Caco-2 (cell line): ENCODE measurements at regions of chr15 and their contacts with region 1.

Region 1: DNA sequence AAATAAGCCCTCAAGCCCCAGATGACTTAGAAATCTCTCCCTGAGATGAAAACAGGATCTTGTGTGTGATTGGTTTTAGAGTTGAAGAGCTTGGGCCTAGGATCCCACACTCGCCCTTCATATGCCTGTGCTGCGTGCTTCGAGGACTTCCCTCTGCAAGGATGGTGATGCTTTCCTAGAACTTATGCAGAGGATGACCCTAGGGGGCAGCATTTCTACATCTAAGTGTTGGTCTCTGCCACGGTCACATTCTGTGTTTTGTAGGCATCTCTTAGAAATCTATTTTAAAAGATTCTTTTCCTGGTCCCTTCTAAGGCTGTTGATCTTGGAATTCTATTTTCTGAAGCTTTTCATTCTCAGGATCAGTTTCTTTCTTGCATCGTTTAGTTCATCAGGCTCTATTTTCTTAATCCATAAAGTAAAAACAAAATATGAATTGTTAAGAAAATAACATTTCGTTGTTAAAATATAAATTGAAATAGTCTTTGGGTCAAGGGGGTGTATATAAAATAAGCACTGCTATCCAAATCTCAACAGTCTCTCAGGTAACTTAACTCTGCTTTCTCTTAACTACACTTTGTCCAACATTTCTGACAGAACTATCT is 45.7 kb downstream of the WDR76 start:
- DNase-seq: peak; percentile 56 to 72
- H3K4me3 ChIP-seq: no peak overlapping the region
- H3K4me3 Mint-ChIP-seq: no peak overlapping the region
- H3K27ac Mint-ChIP-seq: no peak overlapping the region
- H3K4me1 ChIP-seq: peaks cover 11% of the 10 kb centered on the region
- H3K4me1 Mint-ChIP-seq: peaks cover 10% of the 10 kb centered on the region
- H3K27me3 ChIP-seq: no peaks in the 10 kb centered on the region
- H3K27me3 Mint-ChIP-seq: no peaks in the 10 kb centered on the region
- CTCF ChIP-seq: peak; percentile 67 to 68

Region 2: GRCh38 chr15:43889042-43889441 is 16.5 kb after region 1 on chr15:
- CTCF ChIA-PET with region 1: interaction called, 5 read pairs
- POLR2A ChIA-PET with region 1: no interaction called
- intact Hi-C with region 1: loop called (anchors 1 kb)
- DNase-seq: peak; percentile 59
- H3K4me3 ChIP-seq: no peak overlapping the region
- H3K4me3 Mint-ChIP-seq: peak overlapping the region; percentile 33
- H3K27ac Mint-ChIP-seq: peak overlapping the region; percentile 48
- H3K4me1 ChIP-seq: peaks cover 32% of the 10 kb centered on the region
- H3K4me1 Mint-ChIP-seq: peaks cover 31% of the 10 kb centered on the region
- H3K27me3 ChIP-seq: no peaks in the 10 kb centered on the region
- H3K27me3 Mint-ChIP-seq: no peaks in the 10 kb centered on the region
- CTCF ChIP-seq: no peak

Region 3: DNA sequence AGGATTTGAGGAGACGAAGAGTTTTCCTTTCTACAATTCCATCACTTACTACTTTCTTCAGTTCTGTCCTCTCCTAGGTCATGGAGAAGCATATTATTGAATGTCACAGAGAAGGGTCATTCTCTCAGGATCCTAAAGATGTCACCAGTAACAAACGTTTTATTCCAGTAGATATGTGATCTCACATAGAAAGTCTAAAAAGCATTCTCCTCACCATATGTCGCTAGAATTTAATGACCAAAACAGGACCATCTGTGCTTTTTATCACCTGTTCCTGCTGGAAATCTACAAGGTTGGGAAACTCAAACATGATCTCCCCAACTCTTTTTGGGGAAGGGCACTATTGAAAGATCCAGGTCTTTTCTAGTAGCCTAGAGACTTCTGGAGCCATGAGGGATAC is 346.6 kb after region 1 on chr15:
- CTCF ChIA-PET with region 1: no interaction called
- POLR2A ChIA-PET with region 1: no interaction called
- intact Hi-C with region 1: loop called (anchors 1 kb)
- DNase-seq: no peak
- H3K4me3 ChIP-seq: no peak overlapping the region
- H3K4me3 Mint-ChIP-seq: no peak overlapping the region
- H3K27ac Mint-ChIP-seq: no peak overlapping the region
- H3K4me1 ChIP-seq: peaks cover 19% of the 10 kb centered on the region
- H3K4me1 Mint-ChIP-seq: peaks cover 6% of the 10 kb centered on the region
- H3K27me3 ChIP-seq: no peaks in the 10 kb centered on the region
- H3K27me3 Mint-ChIP-seq: no peaks in the 10 kb centered on the region
- CTCF ChIP-seq: no peak

Region 4: DNA sequence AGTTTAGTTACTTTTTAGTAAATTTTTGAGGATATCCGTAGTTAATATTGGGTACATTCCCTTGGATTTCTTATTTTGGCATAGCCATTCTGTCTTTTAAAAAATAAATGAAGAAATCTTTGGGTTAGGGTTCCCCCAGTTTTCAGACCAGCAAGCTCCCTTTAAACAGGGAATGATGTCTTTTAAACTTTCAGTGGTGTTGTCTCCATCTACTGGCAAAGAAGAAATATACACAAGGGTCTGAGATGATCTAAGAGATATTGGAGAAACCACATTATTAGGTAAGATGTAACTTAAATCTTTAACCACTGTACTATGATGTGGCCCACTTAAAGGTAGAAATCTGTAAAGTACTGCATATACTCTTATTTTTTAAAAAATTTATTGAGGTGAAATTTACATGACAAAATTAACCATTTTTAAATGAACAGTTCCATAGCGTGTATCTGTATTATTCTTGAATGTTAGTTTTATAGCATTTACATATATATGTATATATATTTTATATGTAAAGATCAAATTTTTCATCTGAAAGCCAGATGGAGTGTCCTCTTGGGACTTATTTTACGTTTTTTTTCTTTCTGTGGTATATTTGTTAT is 629.3 kb after region 1 on chr15:
- CTCF ChIA-PET with region 1: no interaction called
- POLR2A ChIA-PET with region 1: no interaction called
- intact Hi-C with region 1: loop called (anchors 10 kb)
- DNase-seq: no peak
- H3K4me3 ChIP-seq: no peak overlapping the region
- H3K4me3 Mint-ChIP-seq: no peak overlapping the region
- H3K27ac Mint-ChIP-seq: no peak overlapping the region
- H3K4me1 ChIP-seq: no peaks in the 10 kb centered on the region
- H3K4me1 Mint-ChIP-seq: no peaks in the 10 kb centered on the region
- H3K27me3 ChIP-seq: no peaks in the 10 kb centered on the region
- H3K27me3 Mint-ChIP-seq: no peaks in the 10 kb centered on the region
- CTCF ChIP-seq: peak; percentile 60 to 62